ENCODE measurements at regions of chr10 and their contacts with region 1.

Region 1: DNA sequence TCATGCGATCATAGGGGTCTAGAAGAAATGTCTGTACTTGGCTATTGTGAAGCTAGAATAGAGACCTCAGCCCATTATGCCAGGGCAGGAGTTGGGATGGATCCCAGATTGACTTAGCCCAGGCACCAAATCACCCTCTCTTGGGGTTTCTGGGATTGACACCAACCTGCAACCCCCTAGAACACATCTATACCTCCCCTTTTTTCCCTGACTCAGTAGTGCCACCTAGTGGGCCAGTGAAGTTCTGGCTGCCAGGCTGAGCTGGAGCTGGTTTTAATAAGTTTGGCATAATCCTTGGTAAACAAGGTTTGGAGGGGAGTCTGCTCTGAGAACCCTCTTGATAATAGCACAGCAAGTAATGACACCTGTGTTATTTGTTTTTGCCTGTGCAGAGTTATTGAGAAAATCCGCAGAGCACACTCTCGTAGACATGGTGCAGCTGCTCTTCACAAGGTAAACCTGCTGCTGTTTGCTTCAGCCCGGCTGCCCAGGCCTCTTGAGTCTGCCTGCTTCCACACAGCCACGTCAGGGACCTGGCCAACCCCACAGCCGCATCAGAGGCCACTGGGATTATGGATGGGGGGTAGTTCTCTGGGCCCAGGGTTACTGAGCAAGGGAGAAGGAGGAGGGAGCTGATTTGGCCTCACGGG is 43.3 kb upstream of the NFKB2 start:
- DNase-seq: peak; percentile 80
- ATAC-seq: peak; percentile 74
- H3K4me3 Mint-ChIP-seq: no peak overlapping the region
- H3K27ac Mint-ChIP-seq: no peak overlapping the region
- H3K4me1 Mint-ChIP-seq: peaks cover 4% of the 10 kb centered on the region
- H3K27me3 Mint-ChIP-seq: no peaks in the 10 kb centered on the region

Region 2: GRCh38 chr10:102167861-102168260 is 184.3 kb before region 1 on chr10:
- CTCF ChIA-PET with region 1: interaction called, 92 read pairs
- DNase-seq: no peak
- ATAC-seq: no peak
- H3K4me3 Mint-ChIP-seq: no peak overlapping the region
- H3K27ac Mint-ChIP-seq: no peak overlapping the region
- H3K4me1 Mint-ChIP-seq: peaks cover 15% of the 10 kb centered on the region
- H3K27me3 Mint-ChIP-seq: no peaks in the 10 kb centered on the region

Region 3: GRCh38 chr10:102291221-102291905 is 60.8 kb before region 1 on chr10:
- CTCF ChIA-PET with region 1: interaction called, 14 read pairs
- DNase-seq: no peak
- ATAC-seq: no peak
- H3K4me3 Mint-ChIP-seq: no peak overlapping the region
- H3K27ac Mint-ChIP-seq: no peak overlapping the region
- H3K4me1 Mint-ChIP-seq: peaks cover 15% of the 10 kb centered on the region
- H3K27me3 Mint-ChIP-seq: no peaks in the 10 kb centered on the region

Region 4: GRCh38 chr10:102334101-102334500 is 18.1 kb before region 1 on chr10:
- CTCF ChIA-PET with region 1: interaction called, 17 read pairs
- DNase-seq: no peak
- ATAC-seq: no peak
- H3K4me3 Mint-ChIP-seq: no peak overlapping the region
- H3K27ac Mint-ChIP-seq: no peak overlapping the region
- H3K4me1 Mint-ChIP-seq: peaks cover 10% of the 10 kb centered on the region
- H3K27me3 Mint-ChIP-seq: no peaks in the 10 kb centered on the region

Region 5: GRCh38 chr10:102384053-102384452 is 31.9 kb after region 1 on chr10:
- CTCF ChIA-PET with region 1: interaction called, 14 read pairs
- DNase-seq: no peak
- ATAC-seq: no peak
- H3K4me3 Mint-ChIP-seq: no peak overlapping the region
- H3K27ac Mint-ChIP-seq: no peak overlapping the region
- H3K4me1 Mint-ChIP-seq: no peaks in the 10 kb centered on the region
- H3K27me3 Mint-ChIP-seq: no peaks in the 10 kb centered on the region

Region 6: DNA sequence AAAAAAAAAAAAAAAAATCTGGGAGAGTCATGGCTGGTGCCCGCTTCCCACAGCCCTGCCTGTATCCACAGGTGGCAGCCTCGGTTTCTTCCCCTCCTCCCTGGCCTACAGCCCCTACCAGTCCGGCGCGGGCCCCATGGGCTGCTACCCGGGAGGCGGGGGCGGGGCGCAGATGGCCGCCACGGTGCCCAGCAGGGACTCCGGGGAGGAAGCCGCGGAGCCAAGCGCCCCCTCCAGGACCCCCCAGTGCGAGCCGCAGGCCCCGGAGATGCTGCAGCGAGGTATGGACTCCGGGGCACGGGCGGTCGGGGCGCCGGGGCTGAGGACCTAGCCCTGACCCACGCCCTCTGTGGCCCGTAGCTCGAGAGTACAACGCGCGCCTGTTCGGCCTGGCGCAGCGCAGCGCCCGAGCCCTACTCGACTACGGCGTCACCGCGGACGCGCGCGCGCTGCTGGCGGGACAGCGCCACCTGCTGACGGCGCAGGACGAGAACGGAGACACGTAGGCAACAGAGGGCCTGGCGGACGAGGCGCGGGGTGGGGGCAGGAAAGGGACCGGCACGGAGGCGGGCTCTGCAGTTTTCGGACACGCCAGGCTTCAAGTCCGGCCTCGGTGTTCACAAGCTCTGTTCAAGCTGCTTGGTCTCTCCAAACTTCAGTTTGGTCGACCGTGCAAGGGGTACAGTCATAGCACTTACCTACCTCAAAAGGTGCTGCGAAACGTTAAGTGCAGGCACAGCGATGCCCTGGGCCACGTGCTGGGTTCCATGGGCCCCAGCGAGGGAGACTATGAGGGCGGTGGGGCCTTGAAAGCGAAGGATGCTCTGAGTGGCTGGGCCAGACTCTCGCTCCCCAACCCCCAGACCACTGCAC is 47.3 kb after region 1 on chr10:
- CTCF ChIA-PET with region 1: interaction called, 25 read pairs
- DNase-seq: peak; percentile 92
- ATAC-seq: peak; percentile 66
- H3K4me3 Mint-ChIP-seq: peak overlapping the region; percentile 52
- H3K27ac Mint-ChIP-seq: peak overlapping the region; percentile 59
- H3K4me1 Mint-ChIP-seq: peaks cover 36% of the 10 kb centered on the region
- H3K27me3 Mint-ChIP-seq: no peaks in the 10 kb centered on the region

Region 7: DNA sequence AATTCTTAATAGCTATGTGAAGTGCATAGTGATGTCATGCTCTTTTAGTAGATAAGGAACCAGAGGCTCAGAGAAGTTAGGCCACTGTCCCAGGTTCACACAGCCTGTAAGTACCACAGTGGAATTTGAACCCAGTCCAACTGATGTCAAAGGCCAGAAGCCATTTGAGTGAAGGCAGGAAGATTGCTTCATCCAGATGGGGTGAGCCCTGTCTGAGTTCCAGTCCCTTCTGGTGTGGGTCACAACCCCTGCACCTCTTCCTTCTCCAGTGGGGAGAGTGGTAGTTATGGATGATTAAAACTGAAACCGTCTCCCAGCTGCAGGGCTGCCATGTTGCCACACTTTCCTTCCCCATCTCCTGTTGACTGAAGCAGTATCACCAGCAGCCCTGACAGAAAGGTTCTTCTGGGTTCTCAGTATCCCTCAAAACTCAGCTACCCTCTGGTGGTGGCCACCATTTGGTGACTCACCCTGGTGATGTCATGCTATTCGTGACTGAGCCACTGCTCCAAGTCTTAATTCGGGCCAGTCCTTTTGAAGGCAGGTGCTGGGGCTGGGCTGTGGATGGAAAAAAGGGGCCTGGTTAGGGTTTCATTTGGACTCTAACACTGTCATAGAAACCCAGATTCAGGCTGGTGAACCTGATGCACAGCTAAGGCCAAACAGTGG is 100.6 kb after region 1 on chr10:
- CTCF ChIA-PET with region 1: no interaction called
- DNase-seq: peak; percentile 85
- ATAC-seq: peak; percentile 46
- H3K4me3 Mint-ChIP-seq: peak overlapping the region; percentile 2
- H3K27ac Mint-ChIP-seq: peak overlapping the region; percentile 78
- H3K4me1 Mint-ChIP-seq: peaks cover 45% of the 10 kb centered on the region
- H3K27me3 Mint-ChIP-seq: no peaks in the 10 kb centered on the region

Region 8: DNA sequence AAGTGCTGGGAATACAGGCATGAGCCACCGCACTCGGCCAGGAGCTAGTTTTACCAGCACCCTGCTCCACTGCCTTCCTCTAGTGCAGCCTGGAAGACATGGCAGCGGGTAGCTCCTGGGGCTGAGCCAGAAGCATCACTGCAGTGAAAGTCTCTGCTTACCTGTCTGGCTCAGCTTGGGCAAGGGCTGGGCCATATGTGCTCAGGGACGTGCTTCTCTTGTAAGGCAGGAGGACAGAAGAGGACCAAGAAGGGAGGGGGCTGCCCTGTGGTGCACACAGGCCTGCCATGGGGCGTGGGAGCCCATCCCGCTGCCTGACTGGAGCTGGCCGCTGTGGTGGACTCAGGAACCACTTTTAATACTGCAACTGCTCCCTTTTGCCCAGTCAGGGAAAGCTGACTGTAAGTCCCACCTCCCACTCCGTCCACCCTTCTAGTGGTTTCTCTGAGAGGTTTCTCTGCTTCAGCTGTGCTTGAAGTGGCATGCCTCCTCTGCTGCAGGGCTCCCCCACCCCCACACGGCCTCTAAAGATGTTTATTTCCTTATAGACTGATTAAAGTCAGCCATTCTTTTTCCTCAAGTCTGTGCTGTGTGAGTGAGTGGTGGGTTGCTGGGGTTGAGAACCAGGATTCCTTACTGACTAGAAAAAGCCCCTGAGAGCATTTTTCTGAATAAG is 124.4 kb after region 1 on chr10:
- CTCF ChIA-PET with region 1: interaction called, 11 read pairs
- DNase-seq: no peak
- ATAC-seq: no peak
- H3K4me3 Mint-ChIP-seq: no peak overlapping the region
- H3K27ac Mint-ChIP-seq: peak overlapping the region; percentile 52
- H3K4me1 Mint-ChIP-seq: peaks cover 12% of the 10 kb centered on the region
- H3K27me3 Mint-ChIP-seq: no peaks in the 10 kb centered on the region